Common myeloid progenitor, CD34-positive (primary cell): ENCODE measurements at regions of chr1 and their contacts with region 1.

Region 1: DNA sequence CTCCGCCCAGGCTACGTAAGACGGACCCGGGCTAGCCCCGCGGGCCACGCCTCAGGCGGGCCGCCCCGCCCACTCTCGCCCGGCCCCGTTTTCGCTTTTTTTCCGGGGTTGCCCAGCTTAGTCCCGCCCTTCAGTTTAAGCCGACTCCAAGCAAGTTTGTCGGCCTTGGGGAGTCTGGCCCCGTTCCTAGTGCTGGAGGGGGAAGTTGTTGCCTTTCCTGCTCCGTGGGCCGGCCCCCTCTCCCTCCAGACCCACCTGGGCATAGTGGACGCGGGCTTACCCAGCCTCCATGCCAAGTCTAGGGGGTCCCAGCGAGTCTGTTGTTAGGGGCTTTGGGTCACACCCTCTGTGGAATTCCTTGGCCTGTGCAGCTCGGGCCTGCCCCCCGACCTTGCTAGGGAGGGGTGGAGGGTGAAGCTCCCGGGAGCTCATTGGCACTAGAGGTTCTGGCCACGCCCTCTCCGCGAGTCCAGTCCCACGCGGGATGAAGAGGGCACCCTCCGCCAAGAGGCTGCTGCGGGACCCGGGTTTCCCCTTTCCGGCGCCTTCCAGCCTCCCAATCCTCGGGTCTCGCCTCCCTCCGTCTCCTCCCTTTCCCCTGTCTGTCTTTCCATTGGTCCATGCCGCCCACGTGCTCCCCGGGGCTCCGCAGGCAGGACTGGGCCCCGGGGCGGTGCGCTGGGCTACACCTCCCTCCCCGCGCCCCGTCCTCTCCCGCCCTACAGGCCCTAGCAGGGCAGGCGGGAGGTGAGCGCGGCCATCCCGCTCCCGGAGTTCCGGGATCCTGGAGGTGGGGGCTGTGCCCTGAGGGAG is 3.3 kb downstream of the RUSC1 start:
- DNase-seq: peak; percentile 88 to 90 (median 90)
- H3K4me3 ChIP-seq: peak overlapping the region; percentile 69 to 92 (median 85)
- H3K27ac ChIP-seq: peak overlapping the region; percentile 40 to 86
- H3K4me1 ChIP-seq: peaks cover 3 to 62% (median 55%) of the 10 kb centered on the region in 4 experiments
- H3K27me3 ChIP-seq: no peaks in the 10 kb centered on the region

Region 2: DNA sequence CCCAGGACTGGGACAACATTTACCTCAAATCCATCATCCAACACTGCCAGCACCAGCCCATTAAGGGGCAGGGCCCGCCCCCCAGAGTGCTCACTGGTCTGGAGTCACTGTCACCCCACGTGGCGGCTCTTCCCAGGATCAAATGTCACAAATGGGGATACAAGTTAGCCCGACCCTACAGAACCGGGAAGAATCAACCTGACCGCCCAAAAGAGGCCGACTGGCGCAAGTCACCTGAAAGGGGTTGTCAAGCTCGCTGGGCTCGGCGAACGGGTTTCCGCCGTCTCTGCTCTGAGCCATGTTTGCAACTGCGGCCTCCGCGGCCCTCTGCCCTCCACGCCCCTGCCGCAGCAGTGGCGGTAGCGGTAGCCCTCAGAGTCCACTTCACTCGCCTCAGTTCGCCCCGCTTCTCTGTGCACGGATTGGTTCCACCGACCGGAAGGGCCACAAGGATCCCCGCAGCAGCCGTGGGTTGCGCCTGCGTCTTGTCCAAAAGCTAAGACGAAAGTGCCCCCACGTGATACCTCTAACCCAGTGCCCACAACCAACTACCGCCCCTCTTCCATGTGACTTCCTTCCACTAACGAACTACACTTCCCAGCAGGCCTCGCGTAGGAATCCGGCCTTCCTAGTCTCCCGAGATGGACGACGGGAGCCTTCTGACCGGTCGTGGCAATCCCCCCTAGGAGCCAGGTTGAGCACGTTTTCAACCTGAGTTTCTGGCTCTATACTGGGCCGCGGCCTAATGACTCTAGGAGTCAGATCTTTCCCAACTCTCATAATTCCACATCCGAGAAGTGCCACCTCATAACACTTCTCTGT is 61.9 kb before region 1 on chr1 and contains the start of gene SCAMP3:
- CTCF ChIA-PET with region 1: interaction called, 12 read pairs
- POLR2A ChIA-PET with region 1: interaction called, 3 read pairs
- DNase-seq: peak; percentile 91 to 93 (median 91)
- H3K4me3 ChIP-seq: peak within 1 kb of the TSS; percentile 89 to 97 (median 97)
- H3K27ac ChIP-seq: peak within 1 kb of the TSS; percentile 68 to 82
- H3K4me1 ChIP-seq: peaks cover 2 to 19% (median 15%) of the 10 kb centered on the region in 4 experiments
- H3K27me3 ChIP-seq: no peaks in the 10 kb centered on the region

Region 3: DNA sequence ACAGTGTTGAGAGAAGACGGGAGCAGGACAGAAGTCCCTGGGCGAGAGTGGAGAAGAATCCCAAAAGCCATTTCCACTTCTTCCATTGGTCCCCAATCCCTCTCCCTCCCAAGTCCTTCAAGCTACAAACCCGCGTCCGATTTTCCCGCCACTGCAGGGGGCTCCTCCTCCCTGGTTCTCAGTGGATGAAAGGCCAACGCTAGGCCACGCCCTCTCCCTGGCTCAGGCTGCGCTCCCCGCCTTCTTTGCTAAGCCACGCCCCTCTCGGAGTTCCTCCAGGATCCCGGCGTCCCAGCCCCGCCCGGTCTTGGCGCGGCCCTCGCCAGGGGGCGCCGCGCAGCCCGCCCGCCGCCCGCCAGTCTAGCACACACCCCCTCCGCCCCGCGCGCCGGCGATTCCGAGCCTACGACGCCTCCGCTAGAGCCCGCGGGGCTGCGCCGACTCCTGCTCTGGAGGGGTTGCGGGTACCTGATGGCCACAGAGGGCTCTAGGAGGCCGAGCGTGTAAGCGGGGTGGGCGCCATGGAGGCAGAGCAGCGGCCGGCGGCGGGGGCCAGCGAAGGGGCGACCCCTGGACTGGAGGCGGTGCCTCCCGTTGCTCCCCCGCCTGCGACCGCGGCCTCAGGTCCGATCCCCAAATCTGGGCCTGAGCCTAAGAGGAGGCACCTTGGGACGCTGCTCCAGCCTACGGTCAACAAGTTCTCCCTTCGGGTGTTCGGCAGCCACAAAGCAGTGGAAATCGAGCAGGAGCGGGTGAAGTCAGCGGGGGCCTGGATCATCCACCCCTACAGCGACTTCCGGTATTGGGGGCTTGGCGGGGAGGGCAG is 46.7 kb before region 1 on chr1 and contains the start of gene HCN3:
- CTCF ChIA-PET with region 1: interaction called, 27 read pairs
- POLR2A ChIA-PET with region 1: interaction called, 5 read pairs
- DNase-seq: peak; percentile 93 to 95 (median 93)
- H3K4me3 ChIP-seq: peak within 1 kb of the TSS; percentile 34 to 85 (median 78)
- H3K27ac ChIP-seq: no peak within 1 kb of the TSS
- H3K4me1 ChIP-seq: peaks cover 11 to 32% (median 28%) of the 10 kb centered on the region in 4 experiments
- H3K27me3 ChIP-seq: no peaks in the 10 kb centered on the region

Region 4: DNA sequence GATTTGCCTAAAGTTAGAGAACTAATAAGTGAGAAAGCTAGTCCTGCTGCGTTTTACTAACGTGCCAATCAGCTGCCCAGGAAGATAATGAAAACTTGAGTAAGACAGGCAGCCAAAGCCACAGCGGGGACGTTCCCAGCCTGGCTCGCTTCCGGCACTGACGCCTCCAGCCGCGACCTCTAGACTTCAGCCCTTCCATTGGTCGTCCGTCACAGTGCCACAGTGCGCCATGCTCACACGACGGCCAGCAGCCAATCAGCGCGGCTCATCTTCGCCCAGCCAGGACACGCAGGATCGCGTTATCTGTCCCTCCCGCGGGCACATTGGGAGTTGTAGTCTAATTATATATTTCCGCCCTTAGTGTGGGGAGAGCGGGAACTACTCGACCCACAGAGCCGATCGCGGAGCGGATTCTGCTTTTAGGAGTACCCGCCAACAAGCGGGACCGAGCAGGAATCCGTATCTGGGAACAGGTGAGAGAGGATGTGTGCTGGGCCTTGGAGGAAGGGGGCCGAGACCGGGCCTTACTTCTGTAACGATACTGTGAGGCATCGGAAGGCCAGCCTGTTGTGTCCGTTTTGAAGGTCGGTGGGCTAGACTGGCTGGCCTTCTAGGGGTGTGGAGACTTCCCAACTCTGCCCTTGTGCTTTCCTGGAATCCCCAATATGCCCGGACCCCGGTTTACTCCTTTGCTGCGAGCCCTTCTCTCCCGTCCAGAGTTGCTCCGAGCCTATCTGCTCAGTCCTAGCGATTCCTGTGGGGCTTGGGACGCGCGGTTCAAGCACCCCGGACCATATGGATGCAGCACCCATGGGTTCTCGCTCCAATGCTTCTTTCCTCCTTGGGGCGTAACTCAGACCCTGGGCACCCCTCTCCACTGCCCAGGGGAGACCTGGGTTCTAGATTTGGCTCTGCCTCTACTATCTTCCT is 15.2 kb before region 1 on chr1 and contains the start of gene FDPS:
- CTCF ChIA-PET with region 1: interaction called, 13 read pairs
- POLR2A ChIA-PET with region 1: interaction called, 3 read pairs
- DNase-seq: peak; percentile 99 to 100 (median 100)
- H3K4me3 ChIP-seq: peak within 1 kb of the TSS; percentile 83 to 97 (median 93)
- H3K27ac ChIP-seq: peak within 1 kb of the TSS; percentile 75 to 95
- H3K4me1 ChIP-seq: peaks cover 4 to 39% (median 21%) of the 10 kb centered on the region in 4 experiments
- H3K27me3 ChIP-seq: no peaks in the 10 kb centered on the region